ENCODE measurements at regions of chr11 and their contacts with region 1.

Region 1: GRCh38 chr11:85664615-85665481 is at the start of gene CREBZF:
- DNase-seq: peak; percentile 93 to 94 (median 94)
- H3K4me3 ChIP-seq: peak within 1 kb of the TSS; percentile 56 to 94 (median 78)
- H3K4me3 Mint-ChIP-seq: peak within 1 kb of the TSS; percentile 98 to 100
- H3K27ac ChIP-seq: peak within 1 kb of the TSS; percentile 86 to 97
- H3K27ac Mint-ChIP-seq: peak within 1 kb of the TSS; percentile 97 to 99 (median 98)
- H3K4me1 ChIP-seq: peaks cover 17 to 32% of the 10 kb centered on the region in 2 donors
- H3K4me1 Mint-ChIP-seq: peaks cover 28% of the 10 kb centered on the region
- H3K27me3 ChIP-seq: no peaks in the 10 kb centered on the region
- H3K27me3 Mint-ChIP-seq: peaks cover 0 to 2% (median 0%) of the 10 kb centered on the region in 3 donors
- CTCF ChIP-seq: no peak
- polyA plus RNA-seq, gene CREBZF: 3.1 to 35.4 (median 3.9) TPM

Region 2: DNA sequence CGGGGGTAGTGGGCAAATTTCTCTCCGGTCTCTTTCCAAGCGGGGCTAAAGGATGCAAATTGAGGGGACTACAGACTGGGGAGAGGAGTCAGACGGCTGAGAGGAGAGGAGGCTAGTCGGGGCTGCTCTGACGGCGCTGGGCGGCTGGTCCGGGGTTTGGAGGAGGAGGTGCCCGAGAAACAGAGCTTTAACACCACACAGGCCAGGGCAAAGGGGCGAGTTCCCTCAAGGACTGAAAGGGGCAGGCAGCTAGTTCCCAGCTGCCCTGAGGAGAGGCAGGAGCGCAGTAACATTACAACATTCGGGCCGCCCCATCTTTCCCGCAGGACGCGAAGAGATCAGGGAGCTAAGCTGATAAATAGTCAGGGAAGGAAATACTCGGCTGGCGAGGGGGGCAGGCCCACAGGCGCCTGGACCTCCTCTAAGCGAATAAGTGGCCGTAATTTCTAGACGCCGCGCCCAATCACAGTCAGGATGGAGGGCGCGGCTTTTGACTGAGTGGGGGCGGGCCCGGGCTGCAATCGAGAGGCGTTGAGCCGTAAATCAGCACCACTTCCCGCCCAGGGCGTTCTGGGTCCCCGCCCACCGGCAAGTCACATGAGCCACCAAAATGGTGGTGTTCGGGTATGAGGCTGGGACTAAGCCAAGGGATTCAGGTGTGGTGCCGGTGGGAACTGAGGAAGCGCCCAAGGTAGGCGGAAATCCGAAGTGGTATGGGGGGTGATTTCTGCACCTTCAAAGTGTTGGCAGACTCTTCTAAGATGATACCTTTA is 36.7 kb before region 1 on chr11 and contains the start of gene TMEM126B:
- intact Hi-C with region 1: loop called (anchors 5 kb)
- DNase-seq: peak; percentile 89 to 94 (median 91)
- H3K4me3 ChIP-seq: peak within 1 kb of the TSS; percentile 68 to 91 (median 89)
- H3K4me3 Mint-ChIP-seq: peak within 1 kb of the TSS; percentile 96 to 98
- H3K27ac ChIP-seq: peak within 1 kb of the TSS; percentile 45 to 87
- H3K27ac Mint-ChIP-seq: peak within 1 kb of the TSS; percentile 88 to 97 (median 95)
- H3K4me1 ChIP-seq: peaks cover 15 to 22% of the 10 kb centered on the region in 2 donors
- H3K4me1 Mint-ChIP-seq: peaks cover 17% of the 10 kb centered on the region
- H3K27me3 ChIP-seq: no peaks in the 10 kb centered on the region
- H3K27me3 Mint-ChIP-seq: peaks cover 0 to 3% (median 0%) of the 10 kb centered on the region in 3 donors
- CTCF ChIP-seq: no peak
- polyA plus RNA-seq, gene TMEM126B: 24.7 to 44.3 (median 41.1) TPM

Region 3: GRCh38 chr11:85652786-85653447 is 11.9 kb before region 1 on chr11:
- intact Hi-C with region 1: loop called in 1 of 2 experiments (anchors 1 kb)
- DNase-seq: no peak
- H3K4me3 ChIP-seq: no peak overlapping the region
- H3K4me3 Mint-ChIP-seq: no peak overlapping the region
- H3K27ac ChIP-seq: no peak overlapping the region
- H3K27ac Mint-ChIP-seq: peak overlapping the region in 1 of 7 donors; percentile 68
- H3K4me1 ChIP-seq: peaks cover 10 to 11% of the 10 kb centered on the region in 2 donors
- H3K4me1 Mint-ChIP-seq: peaks cover 17% of the 10 kb centered on the region
- H3K27me3 ChIP-seq: no peaks in the 10 kb centered on the region
- H3K27me3 Mint-ChIP-seq: no peaks in the 10 kb centered on the region
- CTCF ChIP-seq: no peak

Region 4: DNA sequence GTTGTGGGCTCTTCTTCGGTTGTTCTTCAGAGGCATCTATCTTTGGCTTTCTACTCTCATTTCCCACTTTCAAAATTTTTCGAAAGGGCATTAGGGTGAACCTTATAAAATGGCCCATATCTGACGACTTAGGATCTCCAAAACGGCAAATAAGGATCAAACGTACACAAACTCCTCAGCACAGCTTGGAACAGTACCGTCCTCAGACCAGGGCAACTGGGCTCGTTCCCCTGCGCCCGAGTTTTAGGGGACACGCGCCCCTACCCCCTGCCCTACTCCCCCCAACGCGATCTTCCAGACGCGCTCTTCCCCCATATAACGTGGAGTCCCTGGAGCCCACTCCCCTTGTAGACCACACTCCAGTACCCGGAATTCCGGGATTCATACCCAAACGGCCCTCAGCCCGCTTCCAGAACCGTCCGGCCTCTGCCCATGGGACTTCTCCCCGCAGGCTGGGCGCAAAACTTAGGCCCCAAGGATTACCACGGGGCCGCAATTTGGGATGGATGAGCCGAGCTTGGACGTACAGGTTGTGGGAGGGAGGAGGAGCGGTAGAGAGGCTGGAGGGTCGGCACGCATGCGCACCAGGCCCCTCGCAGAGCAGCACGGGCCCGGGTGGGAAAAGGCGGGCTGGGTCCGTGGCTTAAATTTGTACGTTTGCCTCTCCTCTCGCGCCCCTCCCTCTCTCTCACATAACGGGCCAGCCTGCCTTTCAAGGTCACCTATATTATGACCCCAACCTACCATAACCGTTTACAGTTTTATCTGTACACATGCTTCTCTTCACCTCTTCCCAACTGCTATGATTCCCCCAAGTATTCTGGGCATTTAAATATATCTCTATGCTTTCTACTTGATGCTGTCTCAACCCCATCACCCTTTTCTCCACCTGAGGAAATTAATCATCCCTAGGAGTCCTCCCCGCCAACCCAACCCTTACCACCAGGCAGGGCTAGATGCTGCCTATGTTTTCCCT is 17.8 kb after region 1 on chr11:
- intact Hi-C with region 1: no loop called
- DNase-seq: peak in 1 of 3 donors; percentile 12
- H3K4me3 ChIP-seq: peak overlapping the region; percentile 46 to 81 (median 52)
- H3K4me3 Mint-ChIP-seq: peak overlapping the region; percentile 81 to 91
- H3K27ac ChIP-seq: peak overlapping the region in 1 of 2 donors; percentile 46
- H3K27ac Mint-ChIP-seq: peak overlapping the region in 4 of 7 donors; percentile 58 to 69 (median 59)
- H3K4me1 ChIP-seq: peaks cover 0 to 7% of the 10 kb centered on the region in 2 donors
- H3K4me1 Mint-ChIP-seq: peaks cover 15% of the 10 kb centered on the region
- H3K27me3 ChIP-seq: no peaks in the 10 kb centered on the region
- H3K27me3 Mint-ChIP-seq: peaks cover 0 to 2% (median 0%) of the 10 kb centered on the region in 3 donors
- CTCF ChIP-seq: no peak

Region 5: GRCh38 chr11:85941380-85941973 is 276.6 kb after region 1 on chr11:
- intact Hi-C with region 1: no loop called
- DNase-seq: peak; percentile 27 to 37 (median 30)
- H3K4me3 ChIP-seq: no peak overlapping the region
- H3K4me3 Mint-ChIP-seq: no peak overlapping the region
- H3K27ac ChIP-seq: no peak overlapping the region
- H3K27ac Mint-ChIP-seq: no peak overlapping the region
- H3K4me1 ChIP-seq: peaks cover 15 to 16% of the 10 kb centered on the region in 2 donors
- H3K4me1 Mint-ChIP-seq: peaks cover 24% of the 10 kb centered on the region
- H3K27me3 ChIP-seq: no peaks in the 10 kb centered on the region
- H3K27me3 Mint-ChIP-seq: peaks cover 0 to 1% (median 1%) of the 10 kb centered on the region in 3 donors
- CTCF ChIP-seq: peak; percentile 67

Region 6: DNA sequence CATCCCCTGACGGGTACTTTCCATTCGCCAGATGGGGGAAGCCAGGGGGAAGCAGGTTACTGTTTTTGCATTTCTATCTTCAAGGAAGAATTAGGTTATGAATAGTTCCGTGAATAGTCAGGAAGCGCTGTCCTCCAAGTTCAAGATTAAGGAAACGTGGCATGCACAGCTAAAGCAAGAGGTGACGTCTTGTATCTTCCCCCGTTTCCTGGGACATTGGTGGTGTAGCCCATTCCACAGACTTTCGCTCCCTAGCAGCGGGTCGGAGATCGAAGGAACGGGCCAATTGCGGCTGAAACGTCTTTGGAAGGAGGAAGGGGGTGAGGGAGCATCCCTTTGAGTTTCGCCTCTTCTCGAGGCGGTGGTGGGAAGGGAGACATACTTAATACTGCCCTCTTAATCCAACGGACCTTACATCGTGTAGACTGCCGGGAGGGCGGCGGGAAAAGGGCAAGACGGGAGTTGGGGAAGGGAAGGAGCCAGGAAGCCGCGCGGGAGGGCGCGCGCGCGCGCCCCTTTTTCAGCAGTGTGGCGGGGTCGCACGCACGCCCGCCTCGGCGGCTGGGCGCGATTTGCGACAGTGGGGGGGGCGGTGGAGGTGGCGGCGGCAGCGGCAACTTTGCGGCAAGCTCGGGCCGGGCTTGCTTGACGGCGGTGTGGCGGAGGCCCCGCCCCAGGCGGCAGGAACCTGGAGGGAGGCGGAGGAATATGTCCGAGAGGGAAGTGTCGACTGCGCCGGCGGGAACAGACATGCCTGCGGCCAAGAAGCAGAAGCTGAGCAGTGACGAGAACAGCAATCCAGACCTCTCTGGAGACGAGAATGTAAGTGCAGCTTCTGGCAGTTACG is 579.9 kb after region 1 on chr11 and contains the start of gene EED:
- intact Hi-C with region 1: loop called in 1 of 2 experiments (anchors 10 kb)
- DNase-seq: peak; percentile 93 to 96 (median 95)
- H3K4me3 ChIP-seq: peak within 1 kb of the TSS; percentile 69 to 100 (median 99)
- H3K4me3 Mint-ChIP-seq: peak within 1 kb of the TSS in 1 of 2 donors; percentile 20
- H3K27ac ChIP-seq: peak within 1 kb of the TSS; percentile 95 to 99
- H3K27ac Mint-ChIP-seq: no peak within 1 kb of the TSS
- H3K4me1 ChIP-seq: peaks cover 23 to 25% of the 10 kb centered on the region in 2 donors
- H3K4me1 Mint-ChIP-seq: peaks cover 29% of the 10 kb centered on the region
- H3K27me3 ChIP-seq: no peaks in the 10 kb centered on the region
- H3K27me3 Mint-ChIP-seq: peaks cover 0 to 3% (median 0%) of the 10 kb centered on the region in 3 donors
- CTCF ChIP-seq: no peak
- polyA plus RNA-seq, gene EED: 2.3 to 17.8 (median 5.1) TPM

Measured in CD14-positive monocyte (primary cell).